ENCODE measurements at regions of chr4 and their contacts with region 1.

Region 1: DNA sequence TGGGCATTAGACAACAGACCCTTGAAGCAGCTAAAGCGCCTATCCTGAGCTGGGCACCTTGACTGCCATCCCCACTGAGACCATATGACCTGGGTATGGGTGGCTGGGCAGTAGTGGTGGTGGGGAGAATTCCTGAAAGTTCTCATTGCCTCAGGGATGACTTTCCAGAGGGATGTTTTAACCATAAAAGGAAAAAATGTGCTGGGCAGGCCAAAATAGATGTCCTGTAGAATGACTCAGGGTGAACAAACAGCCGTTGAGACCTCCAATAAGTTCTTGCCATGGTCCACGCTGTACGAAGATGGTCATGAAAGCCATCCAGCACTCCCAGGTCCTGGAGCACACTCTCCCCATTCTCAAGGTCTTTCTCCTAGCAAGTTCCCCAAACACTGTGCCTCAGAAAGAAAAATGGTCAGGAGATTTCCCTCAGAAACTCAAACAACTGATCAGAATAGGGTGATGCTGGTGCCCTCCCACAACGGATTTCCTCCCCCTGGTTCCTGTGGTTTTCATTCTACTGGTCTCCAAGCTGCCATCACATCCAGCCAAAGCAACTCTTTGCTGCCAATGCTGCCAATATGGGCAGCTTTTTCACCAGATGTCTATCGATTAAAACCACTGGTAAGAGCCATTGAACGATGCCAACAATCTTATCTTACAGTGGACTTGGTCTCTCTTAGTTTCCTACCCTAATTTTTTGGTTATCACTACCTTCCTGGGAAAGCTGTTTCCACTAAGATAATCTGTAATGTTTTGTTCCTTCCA is 11.2 kb downstream of the CDKN2AIP start:
- DNase-seq: no peak
- ATAC-seq: 0 out of 2 replicates have a peak, but pooled peaks have one; percentile 21
- H3K4me3 ChIP-seq: no peak overlapping the region
- H3K27ac ChIP-seq: no peak overlapping the region
- H3K4me1 ChIP-seq: no peaks in the 10 kb centered on the region
- H3K27me3 ChIP-seq: no peaks in the 10 kb centered on the region
- CTCF ChIP-seq: no peak

Region 2: GRCh38 chr4:183437452-183437851 is 18.2 kb before region 1 on chr4:
- CTCF ChIA-PET with region 1: no interaction called
- POLR2A ChIA-PET with region 1: interaction called, 11 read pairs
- in situ Hi-C with region 1: no loop called
- intact Hi-C with region 1: no loop called
- DNase-seq: no peak
- ATAC-seq: no peak
- H3K4me3 ChIP-seq: no peak overlapping the region
- H3K27ac ChIP-seq: peak overlapping the region; percentile 97
- H3K4me1 ChIP-seq: peaks cover 29% of the 10 kb centered on the region
- H3K27me3 ChIP-seq: no peaks in the 10 kb centered on the region
- CTCF ChIP-seq: no peak

Region 3: DNA sequence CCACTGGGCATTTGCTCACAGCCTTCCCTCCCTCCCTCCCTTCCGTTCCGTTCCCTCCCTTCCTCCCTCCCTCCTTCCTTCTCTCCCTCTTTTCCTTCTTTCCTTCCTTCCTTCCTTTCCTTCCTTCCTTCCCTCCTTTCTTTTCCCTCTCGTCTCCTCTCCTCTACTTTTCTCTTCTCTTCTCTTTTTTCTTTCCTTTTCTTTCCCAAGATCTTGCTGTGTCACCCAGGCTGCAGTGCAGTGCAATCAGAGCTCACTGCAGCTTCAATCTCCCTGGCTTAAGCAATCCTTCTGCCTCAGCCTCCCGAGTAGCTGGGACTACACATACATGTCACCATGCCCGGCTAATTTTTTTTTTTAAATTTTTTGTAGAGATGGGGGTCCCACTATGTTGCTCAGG is 22.5 kb after region 1 on chr4:
- CTCF ChIA-PET with region 1: interaction called, 10 read pairs
- POLR2A ChIA-PET with region 1: no interaction called
- in situ Hi-C with region 1: no loop called
- intact Hi-C with region 1: no loop called
- DNase-seq: no peak
- ATAC-seq: peak; percentile 62; the same call in 1 of the 2 replicates
- H3K4me3 ChIP-seq: peak overlapping the region in 1 of 2 experiments; percentile 34; a peak in 3 of 4 replicates
- H3K27ac ChIP-seq: no peak overlapping the region
- H3K4me1 ChIP-seq: no peaks in the 10 kb centered on the region; the same call in 1 of the 2 replicates
- H3K27me3 ChIP-seq: no peaks in the 10 kb centered on the region
- CTCF ChIP-seq: no peak

Region 4: GRCh38 chr4:184114431-184114830 is 658.8 kb after region 1 on chr4:
- CTCF ChIA-PET with region 1: no interaction called
- POLR2A ChIA-PET with region 1: no interaction called
- in situ Hi-C with region 1: no loop called
- intact Hi-C with region 1: no loop called
- DNase-seq: no peak
- ATAC-seq: no peak
- H3K4me3 ChIP-seq: no peak overlapping the region
- H3K27ac ChIP-seq: no peak overlapping the region
- H3K4me1 ChIP-seq: no peaks in the 10 kb centered on the region
- H3K27me3 ChIP-seq: no peaks in the 10 kb centered on the region
- CTCF ChIP-seq: no peak; the same call in 1 of the 2 replicates

Measured in Panc1 (cell line).